ENCODE measurements at regions of chr3 and their contacts with region 1.

Region 1: DNA sequence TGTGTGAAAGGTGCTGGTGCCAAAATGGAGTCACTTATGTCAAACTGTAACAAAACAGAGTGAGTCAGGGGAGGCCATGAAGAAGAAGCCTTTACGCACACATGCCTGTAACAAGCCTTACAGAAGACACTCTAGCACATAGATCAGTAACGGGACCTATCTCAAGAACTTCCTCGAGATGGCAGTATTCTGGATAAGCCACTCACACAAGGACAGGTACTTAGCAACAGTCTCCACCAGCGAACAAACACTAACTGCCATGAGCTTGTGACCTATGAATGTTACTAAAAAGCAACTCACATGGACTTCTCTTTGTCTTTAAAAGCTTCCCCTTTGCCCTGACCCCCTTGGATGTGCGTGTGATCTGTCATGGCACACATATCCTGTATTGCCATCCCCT is 235.1 kb downstream of the CD47 start:
- DNase-seq: peak; percentile 60
- ATAC-seq: peak; percentile 99
- H3K4me3 ChIP-seq: no peak overlapping the region
- H3K27ac ChIP-seq: no peak overlapping the region
- H3K4me1 ChIP-seq: peaks cover 22% of the 10 kb centered on the region
- H3K27me3 ChIP-seq: no peaks in the 10 kb centered on the region
- CTCF ChIP-seq: peak; percentile 61
- EP300 ChIP-seq: no peak
- POLR2A ChIP-seq: no peak
- RAD21 ChIP-seq: no peak

Region 2: DNA sequence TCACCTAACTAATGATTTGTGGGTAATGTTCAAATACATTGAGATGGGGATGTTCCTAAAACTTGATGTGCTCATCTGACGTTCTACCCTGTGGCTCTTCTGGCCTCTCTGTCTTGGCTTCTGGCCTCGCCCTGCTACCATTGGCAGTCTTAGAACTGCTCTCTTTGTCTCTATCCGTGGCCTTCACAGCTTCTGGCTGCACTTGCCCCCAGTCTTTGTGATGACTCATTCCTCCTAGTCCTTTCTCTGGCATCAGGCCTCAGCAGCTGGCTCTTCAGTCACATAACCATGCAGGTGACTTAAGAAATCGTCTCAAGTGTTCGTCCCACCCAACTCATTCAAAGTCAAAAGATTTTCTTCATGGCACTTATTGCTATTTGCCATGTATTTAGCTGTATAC is 144.9 kb before region 1 on chr3:
- CTCF ChIA-PET with region 1: no interaction called
- POLR2A ChIA-PET with region 1: no interaction called
- in situ Hi-C with region 1: no loop called
- intact Hi-C with region 1: no loop called
- DNase-seq: no peak
- ATAC-seq: no peak
- H3K4me3 ChIP-seq: no peak overlapping the region
- H3K27ac ChIP-seq: no peak overlapping the region
- H3K4me1 ChIP-seq: no peaks in the 10 kb centered on the region
- H3K27me3 ChIP-seq: no peaks in the 10 kb centered on the region
- CTCF ChIP-seq: no peak
- EP300 ChIP-seq: no peak
- POLR2A ChIP-seq: no peak
- RAD21 ChIP-seq: no peak

Region 3: DNA sequence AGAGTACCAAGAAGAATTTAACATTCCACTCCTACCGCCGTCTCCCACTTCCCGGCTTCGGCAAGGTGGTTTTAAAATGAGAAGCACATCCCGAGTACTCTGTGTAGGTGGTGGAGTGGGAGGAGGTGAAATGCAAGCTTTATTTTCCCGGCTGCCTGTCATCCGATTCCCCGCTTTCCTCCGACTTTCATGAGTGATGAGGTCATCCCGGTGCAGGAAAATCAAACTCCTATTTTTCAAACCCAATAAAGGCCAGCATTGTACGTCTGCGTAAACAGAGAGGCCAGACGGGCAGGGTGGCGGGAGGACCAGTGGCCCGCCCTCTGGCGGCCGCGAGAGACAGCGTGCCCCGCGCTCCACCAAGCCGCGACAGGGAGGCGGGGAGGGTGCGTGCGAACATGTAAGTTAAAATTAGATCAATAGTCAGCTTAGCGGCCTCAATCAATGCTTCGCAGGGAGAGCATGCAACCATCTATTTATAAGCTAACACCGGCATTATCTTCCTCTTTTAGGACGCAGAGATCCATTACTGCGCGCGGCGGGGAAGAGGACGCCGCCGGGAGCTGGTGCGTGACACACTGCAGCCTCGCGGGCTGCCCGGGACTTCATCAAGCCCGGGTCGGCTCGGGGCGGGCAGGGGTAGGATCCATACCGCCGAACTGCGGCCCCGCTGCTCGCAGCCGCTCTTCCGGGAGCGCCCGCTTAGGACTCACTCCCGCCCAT is 71.8 kb after region 1 on chr3:
- CTCF ChIA-PET with region 1: interaction called, 6 read pairs
- POLR2A ChIA-PET with region 1: no interaction called
- in situ Hi-C with region 1: no loop called
- intact Hi-C with region 1: loop called (anchors 10 kb)
- DNase-seq: peak; percentile 66
- ATAC-seq: peak; percentile 100
- H3K4me3 ChIP-seq: peak overlapping the region; percentile 55 to 63 (median 57)
- H3K27ac ChIP-seq: no peak overlapping the region
- H3K4me1 ChIP-seq: peaks cover 6% of the 10 kb centered on the region; the same call in 1 of the 2 replicates
- H3K27me3 ChIP-seq: peaks cover 4 to 21% of the 10 kb centered on the region in 2 experiments; a peak in 4 of 5 replicates
- CTCF ChIP-seq: peak; percentile 91
- EP300 ChIP-seq: peak in 1 of 2 experiments; percentile 7; a peak in 1 of 4 replicates
- POLR2A ChIP-seq: no peak
- RAD21 ChIP-seq: peak; percentile 76

Measured in HepG2 (cell line).